Common myeloid progenitor, CD34-positive (primary cell): ENCODE measurements at regions of chr2 and their contacts with region 1.

Region 1: DNA sequence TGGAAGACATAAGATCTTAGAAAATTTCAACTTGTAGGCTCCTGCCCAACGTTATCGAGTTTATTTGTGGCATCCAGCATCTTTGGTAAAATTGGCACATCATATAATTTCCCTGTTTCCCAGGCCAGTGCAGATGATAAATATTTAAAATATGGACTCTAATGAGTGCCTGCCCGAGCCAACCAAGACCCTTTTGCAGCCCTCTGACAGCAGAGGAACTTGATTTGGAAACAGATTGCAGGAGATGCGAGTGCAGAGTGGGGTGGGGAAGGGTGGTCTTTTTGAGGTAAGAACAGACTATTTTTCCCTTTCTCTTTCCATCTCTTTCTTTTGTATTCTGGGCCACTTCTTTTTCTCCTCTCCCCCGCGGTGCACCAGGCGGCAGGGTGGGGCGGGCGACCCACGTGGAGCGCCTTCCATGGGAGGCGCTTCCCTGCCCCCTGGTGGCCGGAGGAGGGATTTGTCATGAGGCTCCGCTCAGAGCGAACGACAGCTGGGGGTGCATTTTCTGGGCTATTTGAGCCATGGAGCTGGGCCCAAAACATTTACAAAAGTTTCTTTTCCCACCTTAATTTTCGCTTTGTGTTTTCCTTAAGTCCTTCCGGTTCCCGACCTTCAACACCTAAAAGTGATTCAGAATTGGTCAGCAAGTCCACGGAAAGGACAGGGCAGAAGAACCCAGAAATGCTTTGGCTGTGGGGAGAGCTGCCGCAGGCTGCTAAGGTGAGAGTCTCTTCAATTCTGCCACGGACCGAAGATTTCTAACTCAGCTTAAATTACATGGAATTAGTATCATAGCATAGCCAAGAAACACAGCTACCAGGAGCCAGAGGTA is 32.7 kb downstream of the LPIN1 start:
- DNase-seq: peak; percentile 75 to 85 (median 81)
- H3K4me3 ChIP-seq: peak overlapping the region in 3 of 7 experiments; percentile 50 to 69 (median 52)
- H3K27ac ChIP-seq: no peak overlapping the region
- H3K4me1 ChIP-seq: peaks cover 8 to 41% (median 25%) of the 10 kb centered on the region in 4 experiments
- H3K27me3 ChIP-seq: no peaks in the 10 kb centered on the region

Region 2: DNA sequence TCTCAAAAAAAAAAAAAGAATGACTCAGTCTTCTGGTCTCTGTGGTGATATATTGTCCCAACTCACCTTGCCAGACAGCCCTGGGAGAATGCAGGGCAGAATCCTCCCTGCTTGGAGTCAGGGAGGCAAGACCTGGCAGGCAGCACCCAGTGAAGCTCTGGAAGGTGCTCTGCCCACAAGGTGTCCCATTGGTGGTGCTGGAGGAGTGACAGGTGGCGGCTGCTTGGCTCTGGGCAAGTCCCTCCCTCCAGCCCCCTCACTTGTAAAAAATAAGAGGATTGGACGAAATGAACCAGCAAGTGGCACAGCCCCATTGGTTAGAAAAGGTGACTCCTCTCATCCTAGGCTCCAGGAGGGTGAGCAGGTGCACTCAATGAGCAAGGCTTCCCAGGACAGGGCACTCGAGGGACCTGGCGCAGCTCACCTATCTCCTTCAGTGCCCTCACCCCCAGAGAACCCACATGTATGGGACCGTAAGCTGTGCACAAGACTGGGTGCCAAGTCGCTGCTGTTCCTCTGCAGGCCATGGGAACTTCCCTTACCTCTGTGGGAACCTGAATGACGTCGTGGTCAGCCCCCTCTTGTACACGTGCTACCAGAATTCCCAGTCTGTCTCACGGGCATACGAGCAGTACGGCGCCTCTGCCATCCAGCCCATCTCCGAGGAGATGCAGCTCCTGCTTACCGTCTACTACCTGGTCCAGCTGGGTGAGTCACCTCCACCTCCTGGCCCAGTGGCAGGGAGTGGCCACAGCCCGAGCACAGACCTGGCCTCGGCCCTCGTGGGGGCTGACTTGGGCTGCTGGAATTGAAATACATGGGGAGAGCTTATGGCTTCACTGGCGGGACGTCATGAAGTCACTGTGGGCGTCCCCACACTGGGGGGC is 190.7 kb before region 1 on chr2:
- CTCF ChIA-PET with region 1: no interaction called
- POLR2A ChIA-PET with region 1: no interaction called
- DNase-seq: no peak
- H3K4me3 ChIP-seq: no peak overlapping the region
- H3K27ac ChIP-seq: no peak overlapping the region
- H3K4me1 ChIP-seq: no peaks in the 10 kb centered on the region
- H3K27me3 ChIP-seq: peaks cover 0 to 9% (median 3%) of the 10 kb centered on the region in 5 experiments

Region 3: GRCh38 chr2:11633923-11634478 is 145.1 kb before region 1 on chr2:
- CTCF ChIA-PET with region 1: no interaction called
- POLR2A ChIA-PET with region 1: no interaction called
- DNase-seq: no peak
- H3K4me3 ChIP-seq: no peak overlapping the region
- H3K27ac ChIP-seq: no peak overlapping the region
- H3K4me1 ChIP-seq: no peaks in the 10 kb centered on the region
- H3K27me3 ChIP-seq: peaks cover 0 to 9% (median 0%) of the 10 kb centered on the region in 5 experiments

Region 4: DNA sequence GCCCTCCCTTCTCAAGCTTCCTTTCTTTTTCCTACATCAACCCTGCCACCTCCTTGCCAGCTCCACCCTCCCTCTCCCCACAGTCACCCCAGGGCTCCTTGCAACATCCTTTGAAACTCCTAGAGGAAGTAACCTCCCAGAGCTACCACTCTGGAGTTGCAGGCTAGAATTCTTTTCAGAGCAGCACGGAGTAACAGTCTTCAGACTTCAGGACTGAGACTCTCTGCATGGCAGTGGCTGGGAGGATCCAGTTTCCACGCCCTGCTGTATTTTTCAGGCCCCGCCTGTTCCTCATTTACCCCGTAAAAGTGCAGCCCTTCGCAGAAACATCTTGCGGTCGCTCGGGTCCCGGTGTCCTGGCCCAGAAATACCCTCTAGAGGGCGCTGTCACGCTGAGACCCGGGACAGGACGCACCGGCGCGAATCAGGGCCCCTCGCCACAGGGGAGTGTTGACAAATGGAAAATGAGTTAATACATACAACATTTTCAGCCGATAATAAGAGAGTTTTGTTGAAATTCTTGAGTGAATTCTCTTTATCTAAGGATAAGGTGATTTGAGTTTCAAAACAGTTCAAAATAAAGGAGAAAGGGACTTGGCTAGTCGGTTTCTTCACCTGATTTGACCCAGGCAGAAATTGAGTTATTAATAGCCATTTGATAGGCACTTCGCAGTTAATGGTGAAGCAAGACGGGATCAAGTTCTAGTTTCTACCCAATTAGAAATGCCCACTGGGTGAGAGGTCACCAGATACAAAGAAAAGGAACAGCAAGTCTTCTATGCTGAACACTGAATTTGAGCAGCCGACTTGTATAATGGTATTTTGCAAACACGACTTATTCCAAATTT is 90.7 kb before region 1 on chr2:
- CTCF ChIA-PET with region 1: interaction called, 344 read pairs
- POLR2A ChIA-PET with region 1: no interaction called
- DNase-seq: peak; percentile 91 to 94 (median 94)
- H3K4me3 ChIP-seq: peak overlapping the region in 4 of 7 experiments; percentile 34 to 67 (median 48)
- H3K27ac ChIP-seq: no peak overlapping the region
- H3K4me1 ChIP-seq: peaks cover 4 to 23% (median 11%) of the 10 kb centered on the region in 4 experiments
- H3K27me3 ChIP-seq: peaks cover 0 to 11% (median 6%) of the 10 kb centered on the region in 5 experiments